Left cardiac atrium (tissue), 4 donors: ENCODE measurements at regions of chr9 and their contacts with region 1.

Region 1: GRCh38 chr9:19358701-19359100 is 21.3 kb downstream of the RPS6 start:
- DNase-seq: no peak
- ATAC-seq: no peak

Region 2: GRCh38 chr9:19306568-19306967 is 52.1 kb before region 1 on chr9:
- intact Hi-C with region 1: loop called in 1 of 2 experiments (anchors 10 kb)
- DNase-seq: no peak
- ATAC-seq: no peak